Mammary epithelial cell (primary cell): ENCODE measurements at regions of chr11 and their contacts with region 1.

Region 1: GRCh38 chr11:62324738-62325556 is 12.3 kb upstream of the ASRGL1 start:
- DNase-seq: peak; percentile 15
- H3K4me3 ChIP-seq: no peak overlapping the region
- H3K27ac ChIP-seq: no peak overlapping the region
- H3K4me1 ChIP-seq: no peaks in the 10 kb centered on the region
- H3K27me3 ChIP-seq: no peaks in the 10 kb centered on the region
- CTCF ChIP-seq: peak; percentile 58 to 63

Region 2: DNA sequence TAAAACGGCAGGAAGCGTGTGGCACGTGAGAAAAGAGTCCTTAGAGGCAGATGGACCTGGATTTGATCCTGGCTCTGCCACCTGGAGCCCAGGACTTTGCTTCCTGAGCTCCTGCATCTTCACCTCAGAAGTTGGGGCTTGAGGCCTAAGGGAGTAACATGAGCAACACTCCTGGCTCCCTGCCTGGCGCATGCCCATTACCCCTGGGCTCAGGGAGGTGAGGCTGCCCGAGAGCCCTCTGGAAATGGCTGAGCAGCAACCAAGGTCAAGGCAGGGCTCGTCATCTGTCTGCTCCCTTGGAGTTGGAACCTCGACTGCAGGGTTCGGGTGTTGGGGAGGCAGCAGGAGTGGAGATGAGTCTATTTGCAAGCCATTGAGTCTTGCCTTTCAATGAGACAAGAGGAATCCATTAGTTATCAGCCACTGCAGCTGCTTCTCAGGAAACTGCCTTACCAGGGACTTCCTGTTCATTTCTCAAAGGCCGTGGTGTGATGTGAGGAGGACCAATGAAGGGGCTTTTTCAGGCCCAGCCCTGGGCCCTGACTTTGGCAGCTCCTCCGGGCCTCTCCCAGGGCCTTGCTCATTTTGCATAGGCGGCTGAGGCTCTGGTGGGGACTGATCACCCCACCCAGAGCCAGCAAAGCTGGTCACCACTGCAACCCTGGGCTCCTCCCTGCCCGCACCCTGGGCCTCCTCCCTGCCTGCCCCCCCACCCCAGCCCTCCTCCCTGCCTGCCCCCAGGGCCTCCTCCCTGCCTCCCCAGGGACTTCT is 490.5 kb before region 1 on chr11:
- CTCF ChIA-PET with region 1: no interaction called
- dilution Hi-C with region 1: no loop called
- in situ Hi-C with region 1: no loop called
- intact Hi-C with region 1: no loop called
- DNase-seq: no peak
- H3K4me3 ChIP-seq: no peak overlapping the region
- H3K27ac ChIP-seq: no peak overlapping the region
- H3K4me1 ChIP-seq: peaks cover 5% of the 10 kb centered on the region
- H3K27me3 ChIP-seq: no peaks in the 10 kb centered on the region
- CTCF ChIP-seq: no peak

Region 3: GRCh38 chr11:62169091-62169847 is 155.7 kb before region 1 on chr11:
- CTCF ChIA-PET with region 1: no interaction called
- dilution Hi-C with region 1: no loop called
- in situ Hi-C with region 1: no loop called
- intact Hi-C with region 1: loop called (anchors 2 kb)
- DNase-seq: no peak
- H3K4me3 ChIP-seq: no peak overlapping the region
- H3K27ac ChIP-seq: no peak overlapping the region
- H3K4me1 ChIP-seq: no peaks in the 10 kb centered on the region
- H3K27me3 ChIP-seq: no peaks in the 10 kb centered on the region
- CTCF ChIP-seq: no peak

Region 4: DNA sequence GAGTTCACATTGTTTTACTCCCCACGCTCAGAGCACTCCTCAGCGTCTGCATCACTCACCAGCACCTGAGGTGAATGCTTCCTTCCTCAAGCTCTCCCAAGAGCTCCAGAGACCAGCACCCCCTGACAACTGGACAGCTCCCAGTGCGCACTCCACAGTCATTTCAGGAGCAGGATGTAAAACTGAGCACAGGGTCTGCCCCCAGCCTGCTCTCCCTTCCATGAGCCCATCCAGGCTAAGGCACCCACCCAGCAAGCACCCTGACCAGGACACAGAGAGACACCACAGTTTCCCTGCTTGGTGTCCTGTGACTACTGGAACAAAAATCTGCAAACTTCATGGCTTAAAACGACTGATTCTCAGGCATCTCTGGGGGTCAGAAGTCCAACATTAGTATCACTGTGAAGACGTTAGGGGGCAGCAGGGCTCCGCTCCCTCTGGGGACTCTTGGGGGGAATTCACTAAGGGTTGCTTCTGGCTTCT is 79.6 kb before region 1 on chr11:
- CTCF ChIA-PET with region 1: no interaction called
- dilution Hi-C with region 1: loop called (anchors 5 kb)
- in situ Hi-C with region 1: no loop called
- intact Hi-C with region 1: no loop called
- DNase-seq: peak; percentile 26
- H3K4me3 ChIP-seq: no peak overlapping the region
- H3K27ac ChIP-seq: no peak overlapping the region
- H3K4me1 ChIP-seq: no peaks in the 10 kb centered on the region
- H3K27me3 ChIP-seq: no peaks in the 10 kb centered on the region
- CTCF ChIP-seq: peak in 1 of 2 donors; percentile 22

Region 5: GRCh38 chr11:62383822-62384221 is 58.9 kb after region 1 on chr11:
- CTCF ChIA-PET with region 1: no interaction called
- dilution Hi-C with region 1: loop called (anchors 5 kb)
- in situ Hi-C with region 1: no loop called
- intact Hi-C with region 1: no loop called
- DNase-seq: no peak
- H3K4me3 ChIP-seq: no peak overlapping the region
- H3K27ac ChIP-seq: no peak overlapping the region
- H3K4me1 ChIP-seq: no peaks in the 10 kb centered on the region
- H3K27me3 ChIP-seq: no peaks in the 10 kb centered on the region
- CTCF ChIP-seq: no peak